ENCODE measurements at regions of chr12 and their contacts with region 1.

Region 1: DNA sequence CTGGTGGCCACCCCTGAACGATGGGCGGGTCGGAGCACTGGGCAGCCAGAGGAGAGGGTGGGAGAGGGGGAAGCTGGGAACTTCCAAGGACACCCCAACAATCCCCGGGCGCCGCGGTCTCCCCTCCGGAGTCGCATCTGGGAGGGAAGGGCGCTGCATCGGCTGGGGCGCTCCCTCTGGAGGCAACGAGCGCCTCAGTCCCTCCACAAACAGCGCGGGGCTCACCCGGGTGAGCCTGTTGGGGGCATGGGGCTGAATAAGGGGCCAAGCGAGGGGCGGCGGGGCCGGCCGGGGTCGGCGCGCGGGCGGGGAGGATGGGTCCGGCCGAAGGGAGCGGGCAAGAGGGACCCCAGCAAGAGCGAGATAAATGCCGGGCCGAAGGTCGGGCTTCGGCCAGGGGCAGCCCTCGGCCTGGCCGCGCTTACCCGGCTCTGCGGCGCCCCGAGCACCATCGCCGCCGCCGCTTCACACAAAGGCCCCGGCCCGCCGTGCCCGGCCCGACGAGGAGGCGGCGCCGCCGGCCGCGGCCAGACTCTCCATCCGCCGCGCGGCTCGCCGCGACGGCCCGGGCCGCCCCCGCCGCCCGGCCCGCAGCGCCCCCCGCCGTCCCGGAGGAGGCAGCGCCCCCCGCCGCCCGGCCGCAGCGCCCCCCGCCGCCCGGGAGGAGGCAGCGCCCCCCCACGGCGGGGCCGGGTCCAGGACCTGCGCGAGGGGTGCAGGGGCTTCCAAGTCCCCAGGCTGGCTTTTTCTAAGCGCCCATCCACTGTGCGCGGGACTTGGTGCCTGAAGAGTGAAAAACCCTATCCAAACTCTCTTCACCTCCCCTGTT is at the start of gene ZBTB39:
- DNase-seq: peak; percentile 64
- ATAC-seq: peak; percentile 75
- H3K4me3 ChIP-seq: peak within 1 kb of the TSS; percentile 93
- H3K27ac ChIP-seq: no peak within 1 kb of the TSS
- H3K4me1 ChIP-seq: peaks cover 28% of the 10 kb centered on the region
- H3K27me3 ChIP-seq: no peaks in the 10 kb centered on the region
- CTCF ChIP-seq: peak; percentile 63
- total RNA-seq, gene ZBTB39: 3.6 and 4.8 TPM in 2 replicates

Region 2: GRCh38 chr12:56763753-56764657 is 242.2 kb before region 1 on chr12:
- CTCF ChIA-PET with region 1: interaction called, 3 read pairs
- POLR2A ChIA-PET with region 1: no interaction called
- intact Hi-C with region 1: loop called (anchors 5 kb)
- DNase-seq: peak; percentile 33
- ATAC-seq: peak; percentile 15; the same call in 1 of the 2 replicates
- H3K4me3 ChIP-seq: no peak overlapping the region
- H3K27ac ChIP-seq: no peak overlapping the region
- H3K4me1 ChIP-seq: peaks cover 5% of the 10 kb centered on the region
- H3K27me3 ChIP-seq: no peaks in the 10 kb centered on the region
- CTCF ChIP-seq: no peak

Region 3: DNA sequence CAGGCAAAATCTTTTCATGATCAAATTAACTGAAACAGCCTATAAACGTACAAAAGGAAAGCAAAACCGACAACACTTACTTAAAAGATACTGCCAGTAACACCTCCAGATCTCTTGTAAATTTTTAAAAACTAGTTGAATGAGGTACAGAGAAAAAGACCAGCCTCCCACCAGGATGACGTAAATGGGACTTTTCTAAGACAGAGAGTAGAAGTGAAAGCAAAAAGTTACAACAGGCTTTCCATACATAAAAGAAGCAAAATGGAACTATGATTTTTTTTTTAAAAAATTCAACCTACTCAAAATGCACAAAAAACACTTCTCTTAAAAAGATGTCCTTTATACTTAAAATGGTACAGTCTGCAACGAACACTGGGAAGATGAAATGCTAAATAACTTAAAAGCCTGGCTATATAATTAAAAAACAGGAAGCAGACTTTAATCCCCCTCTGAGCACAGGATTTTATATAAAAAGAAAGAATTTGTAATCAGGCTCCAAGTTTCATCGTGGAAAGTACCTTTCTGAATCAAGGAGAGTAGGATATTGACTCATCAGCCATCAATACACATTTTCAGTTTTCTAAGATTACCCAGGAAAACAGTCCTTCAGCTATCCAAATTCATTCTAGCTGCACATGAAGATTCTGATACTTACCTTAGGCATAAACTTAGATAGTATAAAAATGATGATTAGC is 57.9 kb after region 1 on chr12:
- CTCF ChIA-PET with region 1: no interaction called
- POLR2A ChIA-PET with region 1: no interaction called
- intact Hi-C with region 1: loop called (anchors 1 kb)
- DNase-seq: no peak
- ATAC-seq: no peak
- H3K4me3 ChIP-seq: no peak overlapping the region
- H3K27ac ChIP-seq: no peak overlapping the region
- H3K4me1 ChIP-seq: no peaks in the 10 kb centered on the region
- H3K27me3 ChIP-seq: no peaks in the 10 kb centered on the region
- CTCF ChIP-seq: no peak

Region 4: DNA sequence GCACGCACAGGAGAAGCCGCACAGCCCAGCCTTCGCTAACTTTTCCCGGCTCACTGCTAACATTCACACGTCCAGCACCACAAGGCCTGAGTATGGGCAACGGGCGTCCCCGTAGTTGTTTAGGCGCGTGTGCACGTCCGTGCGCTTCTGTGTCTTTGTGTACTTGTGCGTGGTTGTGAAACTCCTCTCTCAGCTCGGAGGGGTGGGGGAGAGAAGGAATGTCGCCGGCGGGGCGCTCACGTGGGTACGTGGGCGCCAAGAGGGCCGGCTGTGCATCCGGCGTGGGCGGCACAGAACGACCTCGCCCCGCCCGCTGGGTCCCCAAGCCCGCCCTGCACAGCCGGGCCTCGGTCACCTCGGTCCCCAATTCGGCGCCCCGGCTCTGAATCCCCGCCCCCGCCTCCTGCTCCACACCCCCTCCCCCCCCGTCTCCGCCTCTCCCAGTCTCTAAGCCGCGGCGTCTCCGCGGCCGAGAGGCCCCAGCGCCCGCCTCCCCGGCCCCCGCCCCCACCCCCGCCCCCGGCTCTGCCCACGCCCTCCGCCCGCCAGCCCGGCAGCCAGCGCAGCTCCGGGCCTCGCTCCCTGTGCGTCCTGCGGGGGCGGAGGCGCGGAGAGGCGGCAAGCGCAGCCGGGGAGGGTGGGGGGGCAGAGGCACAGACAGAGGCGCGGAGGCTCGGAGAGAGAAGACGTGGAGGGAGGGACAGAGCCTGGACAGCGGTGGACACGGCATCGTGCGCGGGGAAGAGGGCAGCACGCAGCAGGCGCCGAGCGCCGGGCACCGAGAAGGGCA is 82.5 kb after region 1 on chr12 and contains the start of gene NAB2:
- CTCF ChIA-PET with region 1: no interaction called
- POLR2A ChIA-PET with region 1: no interaction called
- intact Hi-C with region 1: no loop called
- DNase-seq: peak; percentile 92
- ATAC-seq: peak; percentile 54
- H3K4me3 ChIP-seq: peak within 1 kb of the TSS; percentile 94
- H3K27ac ChIP-seq: peak within 1 kb of the TSS; percentile 98
- H3K4me1 ChIP-seq: peaks cover 25% of the 10 kb centered on the region
- H3K27me3 ChIP-seq: no peaks in the 10 kb centered on the region
- CTCF ChIP-seq: no peak
- total RNA-seq, gene NAB2: 17.4 and 20.2 TPM in 2 replicates

Region 5: DNA sequence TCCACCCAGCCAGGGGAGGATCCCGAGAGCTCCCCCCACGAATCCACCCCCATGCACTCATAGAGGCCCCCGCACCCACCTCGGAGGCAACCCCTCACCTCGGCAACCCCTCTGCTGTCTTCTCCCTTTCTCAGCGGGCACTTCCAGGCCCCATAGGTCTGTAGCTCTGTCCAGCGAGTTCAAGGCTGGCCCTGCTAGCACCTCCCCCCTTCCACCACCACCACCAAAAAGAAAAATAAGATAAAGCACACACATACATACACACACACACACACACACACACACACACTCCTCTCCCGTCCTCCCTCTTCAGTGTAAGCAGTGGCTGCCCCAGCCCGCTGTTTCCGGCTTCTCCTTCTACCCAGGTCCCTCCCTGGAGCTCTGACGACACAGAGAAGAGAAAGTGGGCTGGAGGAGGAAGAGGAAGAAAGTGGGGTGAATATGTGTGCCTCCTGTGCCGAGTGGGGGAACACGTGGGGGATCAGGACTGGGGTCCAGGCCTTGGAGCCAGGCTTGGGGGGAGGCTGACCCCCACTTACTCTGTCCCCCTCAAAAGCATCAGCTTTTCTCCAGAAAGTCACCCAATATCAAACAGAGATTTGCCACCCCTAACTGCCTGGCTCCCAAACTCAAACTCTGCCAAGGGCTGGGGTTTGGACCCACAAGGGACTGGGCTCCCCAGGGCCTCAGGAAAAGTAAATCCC is 105.0 kb after region 1 on chr12 and contains the start of gene STAT6:
- CTCF ChIA-PET with region 1: interaction called, 10 read pairs
- POLR2A ChIA-PET with region 1: no interaction called
- intact Hi-C with region 1: loop called (anchors 1 kb)
- DNase-seq: peak; percentile 59
- ATAC-seq: peak; percentile 53
- H3K4me3 ChIP-seq: peak within 1 kb of the TSS; percentile 69
- H3K27ac ChIP-seq: peak within 1 kb of the TSS; percentile 82
- H3K4me1 ChIP-seq: peaks cover 32% of the 10 kb centered on the region
- H3K27me3 ChIP-seq: no peaks in the 10 kb centered on the region
- CTCF ChIP-seq: no peak
- total RNA-seq, gene STAT6: 20.8 and 28.4 TPM in 2 replicates

Measured in PC-3 (cell line).